ENCODE measurements at regions of chr17 and their contacts with region 1.

Region 1: GRCh38 chr17:2054512-2055291 is at the start of gene HIC1:
- DNase-seq: no peak
- H3K4me3 ChIP-seq: peak within 1 kb of the TSS; percentile 66 to 70
- H3K27ac ChIP-seq: peak within 1 kb of the TSS; percentile 95
- H3K4me1 ChIP-seq: peaks cover 59% of the 10 kb centered on the region
- H3K27me3 ChIP-seq: peaks cover 6% of the 10 kb centered on the region
- CTCF ChIP-seq: peak; percentile 84 to 96 (median 94)
- POLR2A ChIP-seq: peak in 1 of 2 donors; percentile 82
- total RNA-seq, gene HIC1: 33.1 TPM

Region 2: DNA sequence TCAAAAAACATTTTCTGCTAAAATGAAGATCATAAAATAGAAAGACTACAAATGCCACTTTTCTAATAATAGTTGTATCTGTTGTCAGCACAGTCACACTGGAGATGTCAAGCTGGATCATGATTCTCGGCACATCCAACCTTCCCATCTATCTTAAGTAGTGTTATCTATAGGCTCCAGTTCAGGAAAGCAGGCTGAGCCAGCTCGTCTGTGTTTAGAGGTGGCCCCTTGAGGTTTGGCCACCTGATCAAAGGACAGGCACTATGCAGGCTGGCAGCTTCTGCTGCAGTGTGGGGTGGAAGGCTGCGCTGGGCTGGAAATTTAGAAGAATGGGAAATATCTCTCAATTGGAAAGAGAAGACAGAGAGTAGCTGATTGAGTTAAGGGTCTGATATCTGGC is 257.4 kb before region 1 on chr17:
- intact Hi-C with region 1: no loop called
- DNase-seq: no peak
- H3K4me3 ChIP-seq: no peak overlapping the region
- H3K27ac ChIP-seq: peak overlapping the region; percentile 41
- H3K4me1 ChIP-seq: no peaks in the 10 kb centered on the region
- H3K27me3 ChIP-seq: no peaks in the 10 kb centered on the region
- CTCF ChIP-seq: no peak
- POLR2A ChIP-seq: no peak

Region 3: GRCh38 chr17:2029911-2030778 is 24.6 kb before region 1 on chr17 and contains the start of gene DPH1:
- intact Hi-C with region 1: no loop called
- DNase-seq: no peak
- H3K4me3 ChIP-seq: peak within 1 kb of the TSS; percentile 68 to 91
- H3K27ac ChIP-seq: peak within 1 kb of the TSS; percentile 71
- H3K4me1 ChIP-seq: peaks cover 37% of the 10 kb centered on the region
- H3K27me3 ChIP-seq: no peaks in the 10 kb centered on the region
- CTCF ChIP-seq: peak in 1 of 3 experiments; percentile 0
- POLR2A ChIP-seq: peak in 1 of 2 donors; percentile 15
- total RNA-seq, gene DPH1: 43.0 TPM

Region 4: DNA sequence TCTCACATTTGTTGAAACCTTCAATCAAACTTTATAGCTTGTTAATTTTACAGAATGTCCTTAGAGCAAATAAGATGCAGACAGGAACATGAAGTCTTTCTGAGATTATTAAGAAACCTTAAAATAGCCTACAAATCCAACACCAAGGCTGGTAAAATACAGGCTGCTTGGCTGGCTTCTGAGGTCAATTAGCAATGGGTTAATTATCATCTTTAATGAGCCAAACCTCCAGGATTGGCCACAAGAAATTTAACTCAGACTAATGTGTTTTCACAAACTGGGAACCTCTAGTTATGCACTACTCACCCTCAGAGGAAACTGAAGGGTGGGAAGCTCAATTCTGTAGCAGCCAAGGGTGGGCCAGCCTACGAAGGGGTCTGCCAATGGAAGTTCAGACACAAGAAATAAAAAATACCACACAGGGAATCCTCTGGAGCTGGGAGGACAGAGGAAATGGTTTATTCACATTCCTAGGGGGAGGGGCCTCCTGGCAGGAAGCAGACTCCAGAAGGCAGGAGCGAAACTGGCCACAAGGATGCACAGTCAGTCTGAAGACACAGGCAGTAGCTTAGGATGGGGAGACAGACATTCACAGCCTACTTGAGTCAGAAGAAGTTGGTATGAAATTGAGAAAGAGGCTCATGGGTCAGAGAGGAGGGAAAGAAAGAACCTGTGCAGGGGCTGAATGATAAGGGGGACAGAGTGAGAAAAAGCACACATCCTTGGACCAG is 36.3 kb after region 1 on chr17:
- intact Hi-C with region 1: loop called (anchors 2 kb)
- DNase-seq: peak in 1 of 2 donors; percentile 89
- H3K4me3 ChIP-seq: no peak overlapping the region
- H3K27ac ChIP-seq: peak overlapping the region; percentile 92
- H3K4me1 ChIP-seq: peaks cover 71% of the 10 kb centered on the region
- H3K27me3 ChIP-seq: no peaks in the 10 kb centered on the region
- CTCF ChIP-seq: peak in 1 of 3 experiments; percentile 42
- POLR2A ChIP-seq: no peak

Region 5: DNA sequence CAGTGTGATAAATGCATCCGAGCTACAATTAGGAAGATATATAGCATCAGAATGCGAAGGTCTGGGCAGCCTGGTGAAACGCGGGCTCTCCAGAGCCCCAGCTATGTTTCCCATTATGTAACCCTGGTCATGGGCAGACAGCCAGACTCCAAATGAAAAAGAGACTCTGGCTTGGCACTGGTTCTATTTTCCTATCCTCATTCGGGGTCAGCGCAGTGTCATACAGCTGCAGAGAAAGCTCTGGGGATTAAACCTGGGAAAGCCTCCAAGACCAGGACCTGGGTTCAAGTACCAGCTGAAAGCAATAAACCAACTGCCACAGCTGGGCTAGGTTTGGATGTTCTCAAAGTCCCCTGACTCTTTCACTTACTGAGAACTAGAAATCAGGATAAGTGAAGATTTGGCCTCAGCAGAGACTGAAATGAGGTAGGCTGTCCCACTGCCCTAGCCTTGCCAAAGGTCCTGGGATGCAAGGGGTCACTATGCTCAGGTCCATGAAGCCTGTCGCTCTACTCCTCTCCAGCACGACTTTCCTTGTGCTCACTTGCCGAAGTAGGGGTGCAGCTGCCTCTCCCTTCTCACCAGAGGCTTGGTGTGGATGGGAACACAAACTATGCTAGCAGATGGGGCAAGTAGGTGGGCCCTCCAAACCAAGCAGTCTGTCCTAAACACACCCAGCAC is 125.1 kb after region 1 on chr17:
- intact Hi-C with region 1: loop called (anchors 5 kb)
- DNase-seq: no peak
- H3K4me3 ChIP-seq: no peak overlapping the region
- H3K27ac ChIP-seq: peak overlapping the region; percentile 75
- H3K4me1 ChIP-seq: peaks cover 86% of the 10 kb centered on the region
- H3K27me3 ChIP-seq: no peaks in the 10 kb centered on the region
- CTCF ChIP-seq: no peak
- POLR2A ChIP-seq: no peak

Region 6: DNA sequence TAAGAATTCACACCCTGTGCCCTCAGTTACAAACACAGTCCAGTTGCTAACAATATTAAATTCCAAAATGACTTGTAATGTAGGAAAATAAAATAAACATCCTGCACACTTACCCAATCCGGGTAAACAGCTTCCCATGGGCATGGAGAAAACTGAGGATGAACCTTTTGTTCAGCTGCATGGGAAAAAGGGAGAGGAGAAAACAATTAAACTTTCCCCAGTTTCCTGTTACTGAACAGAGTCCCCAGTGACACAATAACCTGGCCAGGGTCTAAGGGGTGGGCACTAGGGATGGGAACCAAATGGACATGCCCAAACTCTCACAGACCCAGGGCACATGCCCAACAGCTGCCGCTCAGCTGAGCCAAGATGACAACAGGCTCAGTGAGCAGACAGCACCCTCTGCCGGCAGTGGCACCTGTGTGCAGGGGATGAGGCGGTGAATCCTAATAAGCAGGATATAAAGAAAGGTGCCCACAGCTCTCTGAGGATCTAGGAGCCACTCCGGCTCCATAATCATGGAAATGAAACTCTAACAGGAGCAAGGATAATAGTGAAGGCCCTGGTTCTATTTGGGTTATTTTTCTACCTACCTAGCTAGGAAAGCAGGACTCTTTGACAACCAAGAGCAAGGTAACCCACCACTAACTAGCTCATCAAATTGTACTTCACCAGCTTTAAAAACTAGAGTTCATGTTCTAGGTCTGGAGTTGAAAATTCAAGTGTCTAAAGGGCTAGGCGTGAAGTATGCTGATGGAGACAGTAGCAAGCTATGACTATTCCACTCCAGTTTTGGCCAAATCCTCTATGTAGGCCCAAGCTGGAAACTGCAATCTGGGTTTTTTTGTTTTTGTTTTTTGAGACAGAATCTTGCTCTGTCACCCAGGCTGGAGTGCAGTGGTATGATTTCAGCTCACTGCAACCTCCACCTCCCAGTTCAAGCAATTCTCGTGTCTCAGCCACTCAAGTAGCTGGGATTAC is 190.1 kb after region 1 on chr17:
- intact Hi-C with region 1: loop called (anchors 2 kb)
- DNase-seq: peak in 1 of 2 donors; percentile 95
- H3K4me3 ChIP-seq: no peak overlapping the region
- H3K27ac ChIP-seq: peak overlapping the region; percentile 63
- H3K4me1 ChIP-seq: peaks cover 36% of the 10 kb centered on the region
- H3K27me3 ChIP-seq: no peaks in the 10 kb centered on the region
- CTCF ChIP-seq: peak; percentile 95 to 99 (median 97)
- POLR2A ChIP-seq: no peak

Region 7: DNA sequence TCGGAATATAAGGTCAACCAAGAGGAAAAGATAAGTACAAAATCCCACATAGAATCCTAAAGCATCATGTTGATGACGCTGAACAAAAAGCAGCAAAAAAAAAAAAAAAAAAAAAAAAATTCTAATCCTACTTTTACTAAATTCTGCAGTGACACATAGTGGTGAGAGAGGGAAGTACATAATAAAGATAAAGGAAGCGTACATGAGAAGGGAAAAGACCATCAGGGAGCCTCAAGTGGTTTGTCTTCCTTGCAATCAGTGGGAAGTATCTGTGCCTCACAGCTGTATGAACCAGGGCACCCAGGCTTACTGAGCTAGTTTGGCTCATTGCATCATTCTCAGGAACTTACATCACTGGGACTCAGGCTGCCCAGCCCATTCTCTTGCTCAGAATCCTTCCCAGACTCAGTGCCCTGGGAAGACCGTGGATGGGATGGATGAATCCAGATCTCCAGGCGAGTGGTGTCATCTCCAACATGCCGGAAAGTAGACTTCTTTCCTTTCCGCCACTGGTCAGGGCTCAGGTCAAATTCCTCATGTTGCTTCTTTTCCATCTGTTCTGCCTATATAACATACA is 227.7 kb after region 1 on chr17:
- intact Hi-C with region 1: loop called (anchors 5 kb)
- DNase-seq: no peak
- H3K4me3 ChIP-seq: no peak overlapping the region
- H3K27ac ChIP-seq: no peak overlapping the region
- H3K4me1 ChIP-seq: no peaks in the 10 kb centered on the region
- H3K27me3 ChIP-seq: no peaks in the 10 kb centered on the region
- CTCF ChIP-seq: peak in 2 of 3 experiments; percentile 26 to 53
- POLR2A ChIP-seq: no peak

Region 8: DNA sequence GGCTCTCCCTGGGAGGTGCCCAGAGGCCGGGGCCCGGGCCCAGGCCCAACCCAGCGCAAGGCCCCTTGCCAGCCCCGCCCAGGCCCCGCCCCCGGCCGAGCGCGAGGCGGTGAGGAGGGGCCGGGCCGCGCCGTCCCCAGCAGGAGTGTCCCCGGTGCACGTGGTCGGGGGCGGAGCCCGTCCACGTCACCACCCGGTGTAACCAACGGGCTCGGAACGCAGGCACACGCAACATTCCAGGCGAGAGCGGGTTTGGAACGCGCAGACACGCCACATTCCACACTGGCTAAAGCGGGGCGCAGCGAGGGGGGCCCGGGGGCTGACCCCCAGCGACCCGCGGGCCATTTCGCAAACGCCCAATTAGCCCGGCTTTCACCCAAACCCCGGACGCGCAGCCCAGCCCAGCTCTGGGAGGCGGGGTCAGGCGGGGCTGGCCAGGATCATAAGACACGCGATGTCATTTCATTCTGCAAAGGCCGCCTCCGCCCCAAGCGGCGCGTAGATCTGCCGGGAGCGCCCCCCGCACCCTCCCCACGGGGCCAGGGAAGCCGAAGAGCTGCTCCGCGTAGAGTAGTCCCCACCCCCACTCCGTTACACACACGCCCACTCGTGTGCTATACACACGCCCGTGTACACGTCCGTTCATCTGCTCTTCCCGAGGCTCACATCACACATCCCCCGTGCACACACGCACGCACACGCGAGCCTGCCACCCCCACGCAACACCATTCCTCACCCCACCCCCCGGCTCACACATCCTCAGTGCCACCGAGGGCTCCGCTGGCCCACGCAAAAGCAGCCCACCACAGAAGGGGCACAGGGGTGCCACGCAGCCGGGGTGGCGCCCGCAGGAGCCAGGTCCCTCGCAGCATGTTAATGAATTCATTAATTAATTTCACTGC is 345.1 kb after region 1 on chr17:
- intact Hi-C with region 1: loop called (anchors 10 kb)
- DNase-seq: peak in 1 of 2 donors; percentile 98
- H3K4me3 ChIP-seq: peak overlapping the region; percentile 78 to 97
- H3K27ac ChIP-seq: peak overlapping the region; percentile 99
- H3K4me1 ChIP-seq: peaks cover 67% of the 10 kb centered on the region
- H3K27me3 ChIP-seq: no peaks in the 10 kb centered on the region
- CTCF ChIP-seq: no peak
- POLR2A ChIP-seq: peak in 1 of 2 donors; percentile 86

Measured in vagina (tissue), 2 donors.